ENCODE measurements at regions of chr12 and their contacts with region 1.

Region 1: GRCh38 chr12:31959161-31959700 is at the start of gene RESF1:
- DNase-seq: peak; percentile 95
- H3K4me3 ChIP-seq: peak within 1 kb of the TSS; percentile 67 to 93 (median 80)
- H3K27ac ChIP-seq: peak within 1 kb of the TSS; percentile 87 to 97 (median 92)
- H3K4me1 ChIP-seq: peaks cover 29 to 45% (median 40%) of the 10 kb centered on the region in 4 donors
- H3K27me3 ChIP-seq: no peaks in the 10 kb centered on the region
- CTCF ChIP-seq: no peak
- EP300 ChIP-seq: no peak
- POLR2A ChIP-seq: peak; percentile 57
- total RNA-seq, gene RESF1: 28.3 to 36.2 (median 32.8) TPM

Region 2: GRCh38 chr12:31728917-31729640 is 230.2 kb before region 1 on chr12 and contains the start of gene AMN1:
- intact Hi-C with region 1: loop called (anchors 5 kb)
- DNase-seq: peak; percentile 100
- H3K4me3 ChIP-seq: peak within 1 kb of the TSS; percentile 70 to 82 (median 74)
- H3K27ac ChIP-seq: peak within 1 kb of the TSS; percentile 89 to 97 (median 95)
- H3K4me1 ChIP-seq: peaks cover 19 to 47% (median 36%) of the 10 kb centered on the region in 4 donors
- H3K27me3 ChIP-seq: no peaks in the 10 kb centered on the region
- CTCF ChIP-seq: peak in 2 of 3 experiments; percentile 14 to 26
- EP300 ChIP-seq: no peak
- POLR2A ChIP-seq: no peak
- total RNA-seq, gene AMN1: 9.4 to 17.1 (median 11.1) TPM